ENCODE measurements at regions of chr18 and their contacts with region 1.

Region 1: GRCh38 chr18:59459369-59460079 is 100.5 kb upstream of the LMAN1 start:
- DNase-seq: no peak
- H3K4me3 ChIP-seq: no peak overlapping the region
- CTCF ChIP-seq: peak; percentile 23

Region 2: GRCh38 chr18:59249205-59249774 is 210.2 kb before region 1 on chr18:
- CTCF ChIA-PET with region 1: interaction called, 13 read pairs
- POLR2A ChIA-PET with region 1: no interaction called
- DNase-seq: no peak
- H3K4me3 ChIP-seq: no peak overlapping the region
- CTCF ChIP-seq: peak; percentile 65

Region 3: DNA sequence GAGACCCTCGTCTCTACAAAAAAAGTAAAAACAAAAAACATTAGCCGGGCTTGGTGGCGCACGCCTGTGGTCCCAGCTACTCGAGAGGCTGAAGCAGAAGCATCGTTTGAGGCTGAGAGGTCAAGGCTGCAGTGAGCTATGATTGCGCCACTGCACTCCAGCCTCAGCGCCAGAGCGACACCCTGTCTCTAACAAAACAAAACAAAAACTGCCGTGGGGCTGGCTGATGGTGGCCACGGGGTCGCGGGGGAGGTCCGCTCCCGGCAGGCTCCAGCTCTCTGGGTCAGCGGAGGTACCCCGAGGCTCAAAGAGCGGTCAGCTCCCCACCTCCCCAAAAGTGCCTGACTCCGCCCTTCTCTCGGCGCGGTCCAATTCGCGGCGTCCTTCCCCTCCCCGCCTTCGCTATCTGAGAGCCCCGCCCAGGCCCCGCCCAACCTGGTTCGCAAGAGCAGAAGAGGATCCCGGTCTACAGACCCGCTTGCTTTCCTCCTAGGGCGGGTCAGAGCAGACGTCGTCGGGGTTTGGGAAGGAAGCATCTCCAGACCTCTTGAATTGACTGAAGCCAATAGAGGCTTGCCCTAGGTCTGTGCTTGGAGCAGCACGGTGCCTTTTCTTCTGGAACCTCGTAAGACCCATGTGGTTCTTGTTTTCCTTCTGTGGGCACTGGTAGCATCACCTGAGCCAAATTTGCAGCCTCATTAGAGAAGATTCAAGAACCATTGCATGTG is 194.1 kb before region 1 on chr18:
- CTCF ChIA-PET with region 1: no interaction called
- POLR2A ChIA-PET with region 1: no interaction called
- DNase-seq: no peak
- H3K4me3 ChIP-seq: peak overlapping the region; percentile 42
- CTCF ChIP-seq: no peak

Region 4: GRCh38 chr18:59383851-59384250 is 75.7 kb before region 1 on chr18:
- CTCF ChIA-PET with region 1: no interaction called
- POLR2A ChIA-PET with region 1: no interaction called
- DNase-seq: no peak
- H3K4me3 ChIP-seq: no peak overlapping the region
- CTCF ChIP-seq: no peak

Region 5: DNA sequence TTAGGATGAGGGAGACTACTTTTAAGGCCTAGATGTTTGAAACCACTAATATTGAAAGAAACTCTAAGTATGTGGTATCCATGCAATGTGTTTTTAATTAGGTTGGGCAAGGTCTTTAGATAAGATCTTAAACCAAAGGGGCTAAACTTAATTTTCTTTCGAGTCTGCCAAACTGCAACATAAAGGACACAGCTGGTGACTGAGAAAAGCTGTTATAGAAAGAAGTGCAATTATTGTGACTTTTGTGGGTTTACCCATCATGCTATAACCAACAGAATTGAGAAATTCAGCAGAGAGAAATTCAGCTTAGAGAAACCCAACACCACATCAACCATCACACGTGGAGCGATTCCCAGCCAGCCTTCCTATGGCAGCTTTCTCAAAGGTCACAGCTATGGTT is 19.1 kb after region 1 on chr18:
- CTCF ChIA-PET with region 1: interaction called, 28 read pairs
- POLR2A ChIA-PET with region 1: no interaction called
- DNase-seq: no peak
- H3K4me3 ChIP-seq: no peak overlapping the region
- CTCF ChIP-seq: no peak

Region 6: DNA sequence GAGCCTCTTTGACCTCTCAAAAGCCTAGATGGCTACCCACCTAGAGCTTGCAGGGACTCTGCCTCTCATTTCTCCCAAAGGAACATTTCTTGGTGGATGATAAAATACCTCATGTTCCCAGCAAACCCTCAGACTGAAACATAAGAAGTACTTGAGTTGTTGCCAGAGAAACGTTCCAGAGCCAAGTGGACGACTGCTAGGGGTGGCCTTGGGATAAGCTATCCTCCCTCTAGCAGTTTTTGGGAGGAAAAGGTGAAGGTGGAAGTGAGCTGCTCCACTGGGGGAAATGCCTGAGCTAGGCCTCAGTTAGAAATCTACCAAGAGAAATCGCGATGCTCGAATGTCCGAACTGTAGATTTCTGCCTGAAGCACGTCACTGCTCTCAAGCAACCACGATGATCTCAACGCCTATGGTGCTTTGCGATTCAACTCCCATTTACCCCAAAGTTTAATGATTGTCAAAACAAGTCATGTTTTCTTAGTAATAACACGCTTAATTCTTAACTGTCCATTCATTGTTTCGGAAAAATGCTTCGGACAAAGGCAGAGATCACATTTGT is 146.2 kb after region 1 on chr18:
- CTCF ChIA-PET with region 1: interaction called, 16 read pairs
- POLR2A ChIA-PET with region 1: no interaction called
- DNase-seq: no peak
- H3K4me3 ChIP-seq: no peak overlapping the region
- CTCF ChIP-seq: no peak

Region 7: DNA sequence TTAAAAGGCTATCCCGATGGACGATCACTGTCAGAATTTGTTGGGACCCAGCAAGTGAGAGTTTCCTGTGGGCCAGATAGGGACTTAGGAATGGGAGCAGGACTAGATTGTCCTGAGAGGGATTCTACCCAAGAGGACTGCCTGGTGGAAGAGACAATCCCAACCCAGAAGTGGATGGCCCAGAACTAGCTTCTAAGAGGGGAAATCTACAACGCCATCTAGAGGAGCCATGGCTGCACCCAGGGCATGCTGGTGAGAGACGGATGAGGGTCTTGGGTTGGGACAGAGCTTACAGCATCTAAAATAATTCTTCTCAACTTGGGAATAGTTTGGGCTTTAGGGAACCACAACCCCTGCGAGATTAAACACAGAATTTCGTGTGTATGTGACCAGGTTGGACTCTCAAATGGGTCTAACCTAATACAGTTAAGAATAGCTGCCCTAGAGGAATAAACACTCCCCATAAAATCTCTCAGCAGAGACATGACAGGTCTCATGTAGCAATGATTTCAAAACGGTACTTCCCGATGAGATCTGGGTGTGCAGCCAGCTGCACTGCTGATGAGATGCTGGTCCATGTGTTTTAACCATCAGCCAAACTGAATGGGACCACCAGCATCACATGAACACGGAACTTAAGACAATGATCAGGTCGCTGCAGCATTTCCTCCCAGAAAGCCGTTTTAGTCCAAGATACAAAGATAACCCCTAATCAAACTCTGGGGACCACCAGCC is 186.9 kb after region 1 on chr18:
- CTCF ChIA-PET with region 1: interaction called, 11 read pairs
- POLR2A ChIA-PET with region 1: no interaction called
- DNase-seq: no peak
- H3K4me3 ChIP-seq: no peak overlapping the region
- CTCF ChIP-seq: no peak

Region 8: GRCh38 chr18:59697236-59697932 is 237.9 kb after region 1 on chr18 and contains the start of gene CCBE1:
- CTCF ChIA-PET with region 1: interaction called, 55 read pairs
- POLR2A ChIA-PET with region 1: no interaction called
- DNase-seq: no peak
- H3K4me3 ChIP-seq: peak within 1 kb of the TSS; percentile 94
- CTCF ChIP-seq: peak; percentile 97

Measured in AG04449 (cell line).